Posterior cingulate gyrus (tissue), 11 donors: ENCODE measurements at regions of chr1 and their contacts with region 1.

Region 1: GRCh38 chr1:63004868-63005267 is 220.9 kb downstream of the ATG4C start:
- DNase-seq: peak in 1 of 10 donors; percentile 31

Region 2: DNA sequence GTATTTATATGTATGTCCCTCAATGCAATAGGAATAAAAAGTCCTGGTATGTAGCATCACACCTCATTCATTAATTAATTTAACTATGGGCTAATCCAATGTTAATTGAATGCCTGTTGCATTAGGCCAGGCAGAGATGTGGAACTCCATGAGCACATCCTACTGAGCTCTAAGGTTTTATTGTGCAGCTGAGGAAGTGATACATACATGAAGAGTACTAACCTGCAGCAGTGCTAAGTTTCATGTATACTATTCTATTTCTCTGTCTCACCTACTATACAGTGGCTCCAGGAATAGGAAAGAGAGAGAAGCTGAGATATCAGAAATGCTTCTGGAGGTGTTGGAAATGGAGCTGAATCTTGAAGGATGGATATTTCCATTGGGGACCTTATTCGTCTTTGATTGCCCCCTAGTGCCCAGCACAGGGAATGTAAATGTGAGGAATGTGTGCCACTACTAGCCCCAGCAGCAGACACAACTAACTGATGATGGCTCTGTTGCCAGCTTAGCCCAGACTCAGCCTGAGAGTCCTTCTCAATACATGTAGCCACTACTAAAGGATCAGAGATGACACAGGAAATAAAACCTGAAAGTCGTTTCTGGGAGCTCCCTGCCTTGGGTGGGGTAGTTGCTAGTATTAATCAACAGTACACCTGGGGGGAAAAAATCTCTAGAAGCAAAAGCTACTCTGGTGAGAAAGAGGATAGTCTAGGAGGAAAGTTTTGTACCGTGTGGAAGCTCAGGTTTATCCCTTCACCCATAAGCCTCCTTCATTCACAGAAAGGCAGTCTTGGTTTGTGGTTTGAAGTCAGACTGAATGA is 144.2 kb after region 1 on chr1:
- intact Hi-C with region 1: loop called (anchors 2 kb)
- DNase-seq: peak in 5 of 10 donors; percentile 17 to 64 (median 35)

Region 3: GRCh38 chr1:63442141-63442475 is 437.2 kb after region 1 on chr1:
- intact Hi-C with region 1: loop called (anchors 5 kb)
- DNase-seq: no peak